Transverse colon (tissue), 4 donors: ENCODE measurements at regions of chr3 and their contacts with region 1.

Region 1: GRCh38 chr3:52831500-52832301 is 1.2 kb upstream of the ITIH4 start:
- DNase-seq: peak; percentile 34
- H3K4me3 ChIP-seq: no peak overlapping the region
- H3K27ac ChIP-seq: peak overlapping the region in 1 of 4 donors; percentile 21
- H3K4me1 ChIP-seq: peaks cover 5 to 10% (median 6%) of the 10 kb centered on the region in 4 donors
- H3K27me3 ChIP-seq: no peaks in the 10 kb centered on the region
- CTCF ChIP-seq: no peak
- EP300 ChIP-seq: no peak
- POLR2A ChIP-seq: no peak

Region 2: GRCh38 chr3:53083521-53083920 is 251.8 kb after region 1 on chr3:
- in situ Hi-C with region 1: loop called in 1 of 4 experiments (anchors 25 kb)
- intact Hi-C with region 1: no loop called
- DNase-seq: no peak
- H3K4me3 ChIP-seq: no peak overlapping the region
- H3K27ac ChIP-seq: no peak overlapping the region
- H3K4me1 ChIP-seq: no peaks in the 10 kb centered on the region
- H3K27me3 ChIP-seq: no peaks in the 10 kb centered on the region
- CTCF ChIP-seq: no peak
- EP300 ChIP-seq: no peak
- POLR2A ChIP-seq: no peak